Prostate gland (tissue), 2 donors: ENCODE measurements at regions of chr22 and their contacts with region 1.

Region 1: DNA sequence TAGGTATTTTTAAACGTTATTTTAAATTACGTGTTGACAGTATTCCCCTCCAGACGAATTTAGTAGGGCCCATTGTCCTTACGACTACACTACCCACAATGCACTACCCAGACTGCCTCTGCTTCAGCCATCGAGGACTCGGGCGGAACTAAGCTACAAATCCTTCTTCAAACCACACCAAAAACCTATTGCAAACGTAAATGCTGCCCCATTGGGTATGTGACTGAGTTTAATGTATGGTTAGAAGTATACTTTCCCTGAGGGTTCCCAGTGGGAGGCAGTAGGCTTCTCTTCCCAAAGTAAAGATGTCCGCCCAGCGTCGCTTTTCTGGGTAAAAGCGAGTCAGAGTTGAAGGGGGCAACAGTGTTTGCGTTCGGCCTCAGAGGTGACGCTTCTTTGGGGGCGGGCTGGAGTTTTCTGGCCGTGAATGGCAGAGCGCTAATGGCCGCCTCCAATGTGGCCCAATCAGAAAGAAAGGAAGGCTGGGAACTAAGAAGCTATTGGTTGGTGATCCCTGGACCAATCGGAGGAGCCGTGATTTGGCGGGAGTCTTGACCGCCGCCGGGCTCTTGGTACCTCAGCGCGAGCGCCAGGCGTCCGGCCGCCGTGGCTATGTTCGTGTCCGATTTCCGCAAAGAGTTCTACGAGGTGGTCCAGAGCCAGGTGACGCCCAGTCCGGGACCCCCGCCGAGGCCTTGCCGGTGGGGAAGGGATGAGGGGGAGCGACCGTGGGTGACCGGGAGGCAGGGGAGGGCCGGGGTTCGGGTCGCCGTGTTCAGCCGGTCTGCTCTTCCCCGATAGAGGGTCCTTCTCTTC is at the start of gene CDC45:
- DNase-seq: peak; percentile 98
- H3K4me3 ChIP-seq: peak within 1 kb of the TSS; percentile 71 to 77
- H3K27ac ChIP-seq: peak within 1 kb of the TSS; percentile 93 to 96
- H3K4me1 ChIP-seq: peaks cover 5% of the 10 kb centered on the region
- H3K27me3 ChIP-seq: no peaks in the 10 kb centered on the region
- CTCF ChIP-seq: no peak
- POLR2A ChIP-seq: peak; percentile 19
- total RNA-seq, gene CDC45: 2.0 to 11.5 TPM

Region 2: GRCh38 chr22:19143967-19144400 is 335.6 kb before region 1 on chr22:
- intact Hi-C with region 1: loop called (anchors 10 kb)
- DNase-seq: no peak
- H3K4me3 ChIP-seq: peak overlapping the region; percentile 63 to 64
- H3K27ac ChIP-seq: peak overlapping the region; percentile 53 to 63
- H3K4me1 ChIP-seq: peaks cover 3% of the 10 kb centered on the region
- H3K27me3 ChIP-seq: peaks cover 4% of the 10 kb centered on the region
- CTCF ChIP-seq: no peak
- POLR2A ChIP-seq: no peak

Region 3: GRCh38 chr22:19178656-19179496 is 300.7 kb before region 1 on chr22 and contains the start of gene SLC25A1:
- intact Hi-C with region 1: loop called (anchors 2 kb)
- DNase-seq: peak; percentile 89
- H3K4me3 ChIP-seq: peak within 1 kb of the TSS; percentile 92 to 93
- H3K27ac ChIP-seq: peak within 1 kb of the TSS; percentile 90 to 97
- H3K4me1 ChIP-seq: peaks cover 12% of the 10 kb centered on the region
- H3K27me3 ChIP-seq: no peaks in the 10 kb centered on the region
- CTCF ChIP-seq: no peak
- POLR2A ChIP-seq: peak; percentile 60
- total RNA-seq, gene SLC25A1: 79.1 to 113 TPM

Region 4: GRCh38 chr22:19291580-19292457 is 187.7 kb before region 1 on chr22 and contains the start of gene CLTCL1:
- intact Hi-C with region 1: loop called (anchors 5 kb)
- DNase-seq: peak; percentile 80
- H3K4me3 ChIP-seq: peak within 1 kb of the TSS; percentile 93 to 96
- H3K27ac ChIP-seq: peak within 1 kb of the TSS; percentile 73 to 78
- H3K4me1 ChIP-seq: no peaks in the 10 kb centered on the region
- H3K27me3 ChIP-seq: no peaks in the 10 kb centered on the region
- CTCF ChIP-seq: no peak
- POLR2A ChIP-seq: peak; percentile 18
- total RNA-seq, gene CLTCL1: 12.1 to 26.2 TPM

Region 5: DNA sequence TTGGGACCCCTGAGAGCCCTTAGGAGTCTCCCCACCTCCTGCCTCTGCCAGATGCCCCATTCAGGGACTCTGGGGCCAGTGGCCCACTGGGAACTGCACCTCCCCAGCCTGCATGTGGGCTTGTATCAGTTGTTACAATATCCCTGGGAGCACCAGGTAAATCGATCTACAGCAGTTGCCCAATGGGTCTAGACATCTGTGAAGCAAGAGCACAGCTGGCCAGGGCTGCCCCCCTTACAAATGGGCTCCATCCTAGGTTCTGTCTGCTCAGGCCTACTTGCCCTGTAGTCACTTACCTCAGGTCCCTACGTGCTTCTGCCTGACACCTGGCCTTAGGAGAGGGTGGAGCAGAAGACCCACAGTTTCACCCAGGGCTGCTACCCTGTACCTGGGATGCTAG is 110.7 kb before region 1 on chr22:
- intact Hi-C with region 1: no loop called
- DNase-seq: no peak
- H3K4me3 ChIP-seq: no peak overlapping the region
- H3K27ac ChIP-seq: no peak overlapping the region
- H3K4me1 ChIP-seq: no peaks in the 10 kb centered on the region
- H3K27me3 ChIP-seq: no peaks in the 10 kb centered on the region
- CTCF ChIP-seq: no peak
- POLR2A ChIP-seq: no peak

Region 6: GRCh38 chr22:19398206-19398605 is 81.4 kb before region 1 on chr22:
- intact Hi-C with region 1: no loop called
- DNase-seq: no peak
- H3K4me3 ChIP-seq: no peak overlapping the region
- H3K27ac ChIP-seq: no peak overlapping the region
- H3K4me1 ChIP-seq: no peaks in the 10 kb centered on the region
- H3K27me3 ChIP-seq: no peaks in the 10 kb centered on the region
- CTCF ChIP-seq: no peak
- POLR2A ChIP-seq: no peak

Region 7: GRCh38 chr22:19410941-19411689 is 68.5 kb before region 1 on chr22:
- intact Hi-C with region 1: no loop called
- DNase-seq: no peak
- H3K4me3 ChIP-seq: no peak overlapping the region
- H3K27ac ChIP-seq: no peak overlapping the region
- H3K4me1 ChIP-seq: peaks cover 9% of the 10 kb centered on the region
- H3K27me3 ChIP-seq: no peaks in the 10 kb centered on the region
- CTCF ChIP-seq: no peak
- POLR2A ChIP-seq: no peak

Region 8: GRCh38 chr22:19440411-19441195 is 39.0 kb before region 1 on chr22:
- intact Hi-C with region 1: loop called (anchors 5 kb)
- DNase-seq: no peak
- H3K4me3 ChIP-seq: no peak overlapping the region
- H3K27ac ChIP-seq: no peak overlapping the region
- H3K4me1 ChIP-seq: no peaks in the 10 kb centered on the region
- H3K27me3 ChIP-seq: no peaks in the 10 kb centered on the region
- CTCF ChIP-seq: no peak
- POLR2A ChIP-seq: no peak

Region 9: DNA sequence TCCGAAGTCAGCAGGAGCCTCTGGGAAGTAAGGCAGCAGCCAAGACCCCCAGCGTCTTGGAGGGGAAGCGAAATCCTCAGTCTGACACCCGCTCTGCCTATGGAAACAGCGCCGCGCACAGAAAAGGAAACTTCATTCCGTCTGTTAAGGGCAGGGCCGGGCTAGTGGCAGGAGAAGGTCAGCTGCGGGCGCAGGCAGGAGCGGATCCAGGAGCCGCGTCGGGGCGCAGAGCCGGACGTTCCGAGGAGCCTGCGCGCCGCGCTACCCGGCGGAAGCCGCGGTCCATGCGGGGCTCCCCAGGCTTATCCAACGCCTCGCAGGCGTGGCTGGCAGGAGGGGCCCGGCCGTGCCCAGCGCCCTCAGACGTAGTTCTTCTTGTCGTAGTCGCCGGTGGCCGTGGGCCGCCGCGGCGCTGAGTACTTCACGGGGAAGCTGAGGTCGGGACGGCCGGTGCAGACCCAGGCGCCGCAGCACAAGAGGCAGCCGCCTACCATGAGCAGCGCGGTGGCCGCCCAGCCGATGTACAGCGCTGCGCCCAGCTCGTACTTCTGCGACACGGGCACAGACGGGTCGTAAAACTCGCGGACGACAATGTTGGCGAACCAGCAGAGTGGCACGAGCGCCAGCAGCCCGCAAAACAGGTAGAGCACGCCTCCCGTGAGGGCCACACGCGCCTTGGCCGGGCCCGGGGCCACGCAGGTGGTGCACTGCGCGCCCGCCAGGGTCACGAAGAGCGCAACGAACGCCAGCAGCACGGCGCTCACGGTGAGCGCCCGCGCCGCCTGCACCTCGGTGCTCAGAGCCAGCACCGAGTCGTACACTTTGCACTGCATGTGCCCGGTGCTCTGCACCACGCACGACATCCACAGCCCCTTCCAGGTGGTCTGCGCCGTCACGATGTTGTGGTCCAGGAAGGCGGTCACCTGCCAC is 43.9 kb after region 1 on chr22:
- intact Hi-C with region 1: no loop called
- DNase-seq: no peak
- H3K4me3 ChIP-seq: peak overlapping the region; percentile 15 to 24
- H3K27ac ChIP-seq: no peak overlapping the region
- H3K4me1 ChIP-seq: no peaks in the 10 kb centered on the region
- H3K27me3 ChIP-seq: peaks cover 8% of the 10 kb centered on the region
- CTCF ChIP-seq: no peak
- POLR2A ChIP-seq: no peak